PC-9 (cell line): ENCODE measurements at regions of chr10 and their contacts with region 1.

Region 1: GRCh38 chr10:91891285-91892001 is 17.8 kb downstream of the FGFBP3 start:
- DNase-seq: peak in 1 of 2 experiments; percentile 72
- H3K4me3 ChIP-seq: no peak overlapping the region
- H3K27ac ChIP-seq: peak overlapping the region; percentile 50
- H3K4me1 ChIP-seq: peaks cover 13% of the 10 kb centered on the region; the same call in 1 of the 2 replicates
- H3K27me3 ChIP-seq: no peaks in the 10 kb centered on the region
- CTCF ChIP-seq: no peak

Region 2: DNA sequence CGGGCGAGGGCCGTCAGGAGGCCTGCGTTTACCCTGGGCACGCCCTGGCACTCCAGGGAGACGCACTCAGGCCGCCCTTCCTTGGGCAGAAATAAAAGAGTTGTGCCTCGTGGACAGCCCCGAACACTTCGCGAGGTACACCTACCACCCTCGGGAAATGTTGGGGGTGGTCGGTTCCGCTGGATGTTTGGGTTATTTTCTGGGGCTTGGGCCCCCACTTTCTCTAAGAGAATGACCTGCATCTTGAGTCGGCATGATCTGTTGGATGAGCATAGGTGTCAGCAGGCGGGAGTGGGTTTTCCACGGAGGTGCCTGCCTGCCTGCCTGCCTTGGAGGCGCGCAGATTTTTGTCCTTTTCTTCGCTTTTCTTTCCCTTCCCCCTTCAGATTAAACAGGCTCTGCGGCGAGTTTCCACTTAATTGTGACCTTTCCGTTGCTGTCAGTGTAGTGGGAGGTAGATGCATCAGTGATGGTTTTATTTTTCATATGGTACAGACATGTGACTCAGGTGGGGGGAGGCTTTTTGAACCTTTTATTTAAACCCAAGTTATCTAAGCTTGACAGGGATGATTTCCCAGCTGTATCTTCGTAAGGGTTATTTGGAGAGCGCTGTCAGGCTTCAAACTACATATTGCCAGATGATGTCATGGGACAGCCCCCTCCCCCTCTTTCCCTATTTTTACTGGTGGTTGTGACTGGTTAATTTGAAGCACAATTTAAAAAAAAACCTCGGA is 480.6 kb before region 1 on chr10:
- CTCF ChIA-PET with region 1: no interaction called
- POLR2A ChIA-PET with region 1: no interaction called
- intact Hi-C with region 1: no loop called
- DNase-seq: no peak
- H3K4me3 ChIP-seq: peak overlapping the region; percentile 70
- H3K27ac ChIP-seq: no peak overlapping the region
- H3K4me1 ChIP-seq: peaks cover 4% of the 10 kb centered on the region; the same call in 1 of the 2 replicates
- H3K27me3 ChIP-seq: no peaks in the 10 kb centered on the region
- CTCF ChIP-seq: no peak

Region 3: GRCh38 chr10:91838199-91838598 is 53.2 kb before region 1 on chr10:
- CTCF ChIA-PET with region 1: no interaction called
- POLR2A ChIA-PET with region 1: no interaction called
- intact Hi-C with region 1: no loop called
- DNase-seq: no peak
- H3K4me3 ChIP-seq: no peak overlapping the region
- H3K27ac ChIP-seq: no peak overlapping the region
- H3K4me1 ChIP-seq: no peaks in the 10 kb centered on the region
- H3K27me3 ChIP-seq: no peaks in the 10 kb centered on the region
- CTCF ChIP-seq: no peak

Region 4: GRCh38 chr10:92799591-92800446 is 908.4 kb after region 1 on chr10:
- CTCF ChIA-PET with region 1: no interaction called
- POLR2A ChIA-PET with region 1: interaction called, 11 read pairs
- intact Hi-C with region 1: no loop called
- DNase-seq: peak in 1 of 2 experiments; percentile 68
- H3K4me3 ChIP-seq: peak overlapping the region; percentile 14; the same call in 1 of the 2 replicates
- H3K27ac ChIP-seq: peak overlapping the region; percentile 26; the same call in 1 of the 2 replicates
- H3K4me1 ChIP-seq: peaks cover 19% of the 10 kb centered on the region
- H3K27me3 ChIP-seq: no peaks in the 10 kb centered on the region
- CTCF ChIP-seq: no peak